B cell (primary cell): ENCODE measurements at regions of chr17 and their contacts with region 1.

Region 1: GRCh38 chr17:68777243-68777855 is 176.2 kb upstream of the FAM20A start:
- DNase-seq: peak; percentile 60
- ATAC-seq: no peak
- H3K4me3 ChIP-seq: no peak overlapping the region
- H3K4me3 Mint-ChIP-seq: no peak overlapping the region
- H3K27ac ChIP-seq: no peak overlapping the region
- H3K27ac Mint-ChIP-seq: no peak overlapping the region
- H3K4me1 ChIP-seq: no peaks in the 10 kb centered on the region
- H3K4me1 Mint-ChIP-seq: peaks cover 14% of the 10 kb centered on the region
- H3K27me3 ChIP-seq: no peaks in the 10 kb centered on the region
- H3K27me3 Mint-ChIP-seq: no peaks in the 10 kb centered on the region
- CTCF ChIP-seq: peak; percentile 74

Region 2: GRCh38 chr17:69223809-69224208 is 446.5 kb after region 1 on chr17:
- CTCF ChIA-PET with region 1: interaction called, 15 read pairs
- POLR2A ChIA-PET with region 1: no interaction called
- intact Hi-C with region 1: no loop called
- DNase-seq: no peak
- ATAC-seq: no peak
- H3K4me3 ChIP-seq: no peak overlapping the region
- H3K4me3 Mint-ChIP-seq: no peak overlapping the region
- H3K27ac ChIP-seq: peak overlapping the region in 1 of 2 donors; percentile 67
- H3K27ac Mint-ChIP-seq: peak overlapping the region; percentile 35
- H3K4me1 ChIP-seq: peaks cover 5 to 19% of the 10 kb centered on the region in 2 donors
- H3K4me1 Mint-ChIP-seq: peaks cover 18% of the 10 kb centered on the region
- H3K27me3 ChIP-seq: no peaks in the 10 kb centered on the region
- H3K27me3 Mint-ChIP-seq: no peaks in the 10 kb centered on the region
- CTCF ChIP-seq: no peak